Activated CD4-positive, alpha-beta T cell treated with anti-CD3 and anti-CD28 coated beads, Interleukin-2, amount 10 ng/mL, durations not matched to agents 24 days and 14 days (primary cell): ENCODE measurements at regions of chr17 and their contacts with region 1.

Region 1: GRCh38 chr17:78250891-78251794 is 19.7 kb downstream of the TMEM235 start:
- DNase-seq: peak; percentile 96
- H3K4me3 Mint-ChIP-seq: peak overlapping the region; percentile 85
- H3K27ac Mint-ChIP-seq: peak overlapping the region; percentile 84
- H3K4me1 Mint-ChIP-seq: peaks cover 40% of the 10 kb centered on the region
- H3K27me3 Mint-ChIP-seq: no peaks in the 10 kb centered on the region

Region 2: DNA sequence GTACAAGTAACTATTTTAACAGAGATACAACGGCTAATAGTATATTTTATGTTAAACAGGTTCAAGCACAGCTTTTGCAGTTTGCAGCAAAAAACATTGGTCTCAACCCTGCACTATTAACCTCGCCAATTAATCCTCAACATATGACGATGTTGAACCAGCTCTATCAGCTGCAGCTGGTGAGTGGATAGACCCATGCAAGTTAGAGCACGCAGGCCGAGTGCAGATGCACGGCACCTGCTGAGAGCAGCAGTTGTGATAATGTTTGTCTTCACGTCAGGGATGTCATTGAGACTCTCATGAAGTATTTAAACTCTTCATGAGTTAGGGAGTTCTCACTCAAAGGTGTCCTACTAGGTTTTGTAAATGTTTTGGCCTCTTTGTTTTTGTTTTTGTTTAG is 168.2 kb before region 1 on chr17:
- intact Hi-C with region 1: loop called (anchors 1 kb)
- DNase-seq: no peak
- H3K4me3 Mint-ChIP-seq: no peak overlapping the region
- H3K27ac Mint-ChIP-seq: no peak overlapping the region
- H3K4me1 Mint-ChIP-seq: peaks cover 6% of the 10 kb centered on the region
- H3K27me3 Mint-ChIP-seq: no peaks in the 10 kb centered on the region

Region 3: DNA sequence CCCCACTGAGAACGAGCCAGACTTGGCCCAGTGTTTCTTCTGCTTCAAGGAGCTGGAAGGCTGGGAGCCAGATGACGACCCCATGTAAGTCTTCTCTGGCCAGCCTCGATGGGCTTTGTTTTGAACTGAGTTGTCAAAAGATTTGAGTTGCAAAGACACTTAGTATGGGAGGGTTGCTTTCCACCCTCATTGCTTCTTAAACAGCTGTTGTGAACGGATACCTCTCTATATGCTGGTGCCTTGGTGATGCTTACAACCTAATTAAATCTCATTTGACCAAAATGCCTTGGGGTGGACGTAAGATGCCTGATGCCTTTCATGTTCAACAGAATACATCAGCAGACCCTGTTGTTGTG is 36.5 kb before region 1 on chr17:
- intact Hi-C with region 1: loop called (anchors 1 kb)
- DNase-seq: no peak
- H3K4me3 Mint-ChIP-seq: peak overlapping the region; percentile 94
- H3K27ac Mint-ChIP-seq: peak overlapping the region; percentile 90
- H3K4me1 Mint-ChIP-seq: peaks cover 12% of the 10 kb centered on the region
- H3K27me3 Mint-ChIP-seq: no peaks in the 10 kb centered on the region

Region 4: GRCh38 chr17:78383725-78384471 is 132.8 kb after region 1 on chr17:
- intact Hi-C with region 1: loop called (anchors 5 kb)
- DNase-seq: peak; percentile 84
- H3K4me3 Mint-ChIP-seq: peak overlapping the region; percentile 83
- H3K27ac Mint-ChIP-seq: peak overlapping the region; percentile 97
- H3K4me1 Mint-ChIP-seq: peaks cover 81% of the 10 kb centered on the region
- H3K27me3 Mint-ChIP-seq: no peaks in the 10 kb centered on the region

Region 5: DNA sequence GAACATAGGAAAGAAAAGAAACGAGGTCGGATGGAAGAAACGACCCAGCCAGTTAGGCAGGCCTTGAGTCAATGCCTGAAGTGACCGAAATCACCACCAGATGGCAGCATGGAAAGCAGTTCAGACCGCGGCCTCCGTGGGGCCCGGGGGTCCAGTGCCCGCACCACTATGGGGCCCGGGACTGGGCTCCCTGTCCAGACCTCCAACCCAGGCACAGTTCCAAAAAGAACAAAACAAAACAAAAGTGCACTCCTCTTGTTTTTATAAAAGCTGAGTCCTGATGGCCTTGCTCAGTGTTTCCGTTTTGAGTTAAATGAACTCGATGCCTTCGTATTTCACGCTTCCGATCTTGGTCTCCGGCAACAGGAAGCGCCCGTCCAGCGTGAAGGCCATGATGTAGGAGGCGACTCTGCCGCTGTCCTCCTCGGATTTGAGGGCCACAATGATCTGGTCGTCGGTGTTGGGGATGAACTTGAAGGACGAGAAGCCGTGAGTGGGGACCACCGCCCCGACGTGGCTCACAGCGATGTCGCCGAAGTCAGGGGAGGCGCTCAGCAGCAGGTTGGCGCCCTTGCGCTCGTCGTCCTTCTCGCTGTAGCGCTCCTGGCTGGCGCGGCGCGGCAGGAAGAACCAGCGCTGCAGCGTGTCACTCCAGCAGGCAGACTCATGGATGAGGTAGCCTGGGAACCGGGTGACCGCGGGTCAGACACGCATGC is 742.3 kb after region 1 on chr17:
- intact Hi-C with region 1: no loop called
- DNase-seq: peak; percentile 86
- H3K4me3 Mint-ChIP-seq: no peak overlapping the region
- H3K27ac Mint-ChIP-seq: peak overlapping the region; percentile 25
- H3K4me1 Mint-ChIP-seq: peaks cover 7% of the 10 kb centered on the region
- H3K27me3 Mint-ChIP-seq: no peaks in the 10 kb centered on the region